ENCODE measurements at regions of chr17 and their contacts with region 1.

Region 1: GRCh38 chr17:4913994-4914393 is 11.1 kb upstream of the CHRNE start:
- DNase-seq: no peak
- H3K4me3 ChIP-seq: no peak overlapping the region
- H3K27ac ChIP-seq: no peak overlapping the region
- H3K4me1 ChIP-seq: peaks cover 0 to under 1% (median 0%) of the 10 kb centered on the region in 4 experiments; a peak in 3 of 7 replicates
- H3K27me3 ChIP-seq: no peaks in the 10 kb centered on the region
- CTCF ChIP-seq: no peak
- EP300 ChIP-seq: no peak
- POLR2A ChIP-seq: no peak
- RAD21 ChIP-seq: no peak

Region 2: GRCh38 chr17:4928881-4929280 is 14.9 kb after region 1 on chr17:
- CTCF ChIA-PET with region 1: interaction called, 29 read pairs
- POLR2A ChIA-PET with region 1: interaction called, 55 read pairs
- DNase-seq: no peak
- H3K4me3 ChIP-seq: no peak overlapping the region
- H3K27ac ChIP-seq: no peak overlapping the region
- H3K4me1 ChIP-seq: no peaks in the 10 kb centered on the region; a peak in 1 of 7 replicates
- H3K27me3 ChIP-seq: no peaks in the 10 kb centered on the region
- CTCF ChIP-seq: no peak
- EP300 ChIP-seq: no peak
- POLR2A ChIP-seq: no peak
- RAD21 ChIP-seq: no peak